Natural killer cell (primary cell): ENCODE measurements at regions of chr12 and their contacts with region 1.

Region 1: DNA sequence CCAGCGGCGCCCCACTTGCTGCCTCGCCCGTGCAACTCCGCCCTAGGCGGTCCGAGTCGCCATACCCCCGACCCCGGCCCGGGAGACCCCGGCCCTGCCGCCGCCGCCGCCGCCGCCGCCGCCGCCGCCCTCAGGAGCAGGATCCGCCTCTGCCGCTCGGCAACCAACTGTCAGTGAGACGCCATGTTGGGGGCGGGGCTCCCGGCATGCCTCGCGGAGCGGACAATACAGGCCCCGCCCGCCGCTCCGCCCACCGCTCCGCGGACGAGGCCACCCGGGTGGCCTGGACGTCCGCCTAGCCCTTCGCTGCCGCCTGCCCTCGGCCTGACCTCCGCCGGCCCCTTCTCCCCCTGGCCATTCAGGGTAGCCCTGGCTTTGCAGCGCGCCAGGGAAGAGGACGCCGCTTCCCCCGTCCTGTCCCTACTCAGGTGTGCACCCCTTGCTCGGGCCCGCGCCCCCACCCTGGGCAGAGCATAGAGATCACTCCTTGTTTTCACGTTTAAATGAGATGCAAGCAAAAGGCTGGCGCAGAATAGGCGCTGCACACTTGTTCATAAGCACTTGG is at the start of gene HECTD4:
- DNase-seq: peak; percentile 91 to 94
- ATAC-seq: peak; percentile 96 to 99 (median 97)
- H3K4me3 ChIP-seq: peak within 1 kb of the TSS; percentile 51
- H3K4me3 Mint-ChIP-seq: peak within 1 kb of the TSS; percentile 99
- H3K27ac ChIP-seq: peak within 1 kb of the TSS; percentile 52
- H3K27ac Mint-ChIP-seq: peak within 1 kb of the TSS; percentile 89 to 96
- H3K4me1 ChIP-seq: peaks cover 21% of the 10 kb centered on the region
- H3K4me1 Mint-ChIP-seq: peaks cover 25 to 28% of the 10 kb centered on the region in 2 donors
- H3K27me3 ChIP-seq: no peaks in the 10 kb centered on the region
- H3K27me3 Mint-ChIP-seq: peaks cover 0 to under 1% of the 10 kb centered on the region in 2 donors
- CTCF ChIP-seq: no peak
- total RNA-seq, gene HECTD4: 66.9 to 82.6 (median 79.2) TPM

Region 2: GRCh38 chr12:112198120-112198733 is 184.1 kb before region 1 on chr12:
- intact Hi-C with region 1: loop called (anchors 1 kb)
- DNase-seq: peak in 1 of 2 donors; percentile 63
- ATAC-seq: peak; percentile 50 to 72 (median 60)
- H3K4me3 ChIP-seq: no peak overlapping the region
- H3K4me3 Mint-ChIP-seq: no peak overlapping the region
- H3K27ac ChIP-seq: no peak overlapping the region
- H3K27ac Mint-ChIP-seq: peak overlapping the region in 1 of 2 donors; percentile 5
- H3K4me1 ChIP-seq: no peaks in the 10 kb centered on the region
- H3K4me1 Mint-ChIP-seq: peaks cover 0 to 5% of the 10 kb centered on the region in 2 donors
- H3K27me3 ChIP-seq: no peaks in the 10 kb centered on the region
- H3K27me3 Mint-ChIP-seq: no peaks in the 10 kb centered on the region
- CTCF ChIP-seq: peak; percentile 21

Region 3: GRCh38 chr12:112409064-112409905 is 27.0 kb after region 1 on chr12 and contains the start of gene RPL6:
- intact Hi-C with region 1: loop called (anchors 1 kb)
- DNase-seq: peak; percentile 61 to 92
- ATAC-seq: peak; percentile 86 to 94 (median 92)
- H3K4me3 ChIP-seq: peak within 1 kb of the TSS; percentile 59
- H3K4me3 Mint-ChIP-seq: peak within 1 kb of the TSS; percentile 100
- H3K27ac ChIP-seq: peak within 1 kb of the TSS; percentile 58
- H3K27ac Mint-ChIP-seq: peak within 1 kb of the TSS; percentile 97 to 99
- H3K4me1 ChIP-seq: peaks cover 16% of the 10 kb centered on the region
- H3K4me1 Mint-ChIP-seq: peaks cover 34 to 35% of the 10 kb centered on the region in 2 donors
- H3K27me3 ChIP-seq: no peaks in the 10 kb centered on the region
- H3K27me3 Mint-ChIP-seq: no peaks in the 10 kb centered on the region
- CTCF ChIP-seq: no peak
- total RNA-seq, gene RPL6: 893 to 1,024 (median 955) TPM

Region 4: DNA sequence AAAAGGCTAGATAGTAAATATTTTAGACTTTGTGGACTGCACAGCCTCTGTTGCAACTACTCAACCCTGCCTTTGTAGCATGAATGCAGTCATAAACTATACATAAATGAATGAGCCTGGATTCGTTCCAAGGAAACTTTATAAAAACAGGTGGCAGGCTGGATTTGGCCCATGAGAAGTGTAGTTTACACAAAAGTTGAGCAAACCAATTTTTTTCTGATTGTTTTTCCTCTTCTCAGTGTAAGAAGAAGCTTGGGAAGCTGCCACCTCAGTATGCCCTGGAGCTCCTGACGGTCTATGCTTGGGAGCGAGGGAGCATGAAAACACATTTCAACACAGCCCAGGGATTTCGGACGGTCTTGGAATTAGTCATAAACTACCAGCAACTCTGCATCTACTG is 534.0 kb after region 1 on chr12:
- intact Hi-C with region 1: no loop called
- DNase-seq: no peak
- ATAC-seq: no peak
- H3K4me3 ChIP-seq: no peak overlapping the region
- H3K4me3 Mint-ChIP-seq: no peak overlapping the region
- H3K27ac ChIP-seq: no peak overlapping the region
- H3K27ac Mint-ChIP-seq: no peak overlapping the region
- H3K4me1 ChIP-seq: no peaks in the 10 kb centered on the region
- H3K4me1 Mint-ChIP-seq: peaks cover 4 to 16% of the 10 kb centered on the region in 2 donors
- H3K27me3 ChIP-seq: no peaks in the 10 kb centered on the region
- H3K27me3 Mint-ChIP-seq: no peaks in the 10 kb centered on the region
- CTCF ChIP-seq: no peak